GM12878 (cell line): ENCODE measurements at regions of chr12 and their contacts with region 1.

Region 1: GRCh38 chr12:123043536-123044001 is 63.1 kb downstream of the ARL6IP4 start:
- DNase-seq: no peak
- ATAC-seq: peak; percentile 89
- H3K4me3 ChIP-seq: no peak overlapping the region
- H3K27ac ChIP-seq: no peak overlapping the region
- H3K4me1 ChIP-seq: no peaks in the 10 kb centered on the region
- H3K27me3 ChIP-seq: no peaks in the 10 kb centered on the region; a peak in 2 of 4 replicates
- CTCF ChIP-seq: peak; percentile 58 to 70 (median 67); a peak in 5 of 6 replicates
- EP300 ChIP-seq: no peak
- POLR2A ChIP-seq: no peak
- RAD21 ChIP-seq: peak; percentile 74

Region 2: GRCh38 chr12:123075646-123076171 is 32.1 kb after region 1 on chr12:
- CTCF ChIA-PET with region 1: no interaction called
- POLR2A ChIA-PET with region 1: no interaction called
- RAD21 ChIA-PET with region 1: no interaction called
- SMC1A ChIA-PET with region 1: interaction called, 12 read pairs
- in situ Hi-C with region 1: no loop called
- intact Hi-C with region 1: no loop called
- DNase-seq: no peak
- ATAC-seq: peak; percentile 81
- H3K4me3 ChIP-seq: no peak overlapping the region
- H3K27ac ChIP-seq: no peak overlapping the region
- H3K4me1 ChIP-seq: peaks cover 12% of the 10 kb centered on the region
- H3K27me3 ChIP-seq: no peaks in the 10 kb centered on the region; a peak in 1 of 4 replicates
- CTCF ChIP-seq: no peak; a peak in 1 of 6 replicates
- EP300 ChIP-seq: no peak
- POLR2A ChIP-seq: no peak
- RAD21 ChIP-seq: no peak